Activated CD8-positive, alpha-beta T cell treated with anti-CD3 and anti-CD28 coated beads for 36 hours (primary cell): ENCODE measurements at regions of chr12 and their contacts with region 1.

Region 1: GRCh38 chr12:47715393-47715876 is 9.6 kb upstream of the RPAP3 start:
- DNase-seq: peak; percentile 91
- ATAC-seq: peak; percentile 88
- H3K4me3 Mint-ChIP-seq: no peak overlapping the region
- H3K27ac Mint-ChIP-seq: no peak overlapping the region
- H3K4me1 Mint-ChIP-seq: peaks cover 19% of the 10 kb centered on the region
- H3K27me3 Mint-ChIP-seq: no peaks in the 10 kb centered on the region
- CTCF ChIP-seq: peak; percentile 71

Region 2: DNA sequence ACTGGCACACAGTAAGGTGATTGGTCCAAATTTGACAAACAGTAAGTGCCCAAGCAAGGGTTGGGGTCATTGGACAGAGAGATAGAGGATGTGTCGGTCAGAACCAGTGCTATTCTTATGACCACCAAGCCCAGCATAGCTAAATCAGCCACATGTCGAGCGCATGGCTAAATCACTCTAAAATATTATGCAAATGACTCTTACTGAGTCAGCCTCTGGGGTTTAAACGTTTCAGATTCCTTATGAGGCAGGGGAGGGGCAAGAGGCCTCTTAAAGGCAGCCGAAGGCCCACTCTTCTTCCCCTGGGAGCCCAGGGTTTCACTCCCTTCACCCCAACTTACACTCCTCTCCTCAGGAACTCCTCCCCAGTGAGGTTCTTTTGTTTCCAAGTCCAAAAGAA is 10.5 kb after region 1 on chr12:
- CTCF ChIA-PET with region 1: interaction called, 15 read pairs
- POLR2A ChIA-PET with region 1: interaction called, 4 read pairs
- intact Hi-C with region 1: no loop called
- DNase-seq: no peak
- ATAC-seq: no peak
- H3K4me3 Mint-ChIP-seq: no peak overlapping the region
- H3K27ac Mint-ChIP-seq: no peak overlapping the region
- H3K4me1 Mint-ChIP-seq: peaks cover 19% of the 10 kb centered on the region
- H3K27me3 Mint-ChIP-seq: no peaks in the 10 kb centered on the region
- CTCF ChIP-seq: no peak

Region 3: DNA sequence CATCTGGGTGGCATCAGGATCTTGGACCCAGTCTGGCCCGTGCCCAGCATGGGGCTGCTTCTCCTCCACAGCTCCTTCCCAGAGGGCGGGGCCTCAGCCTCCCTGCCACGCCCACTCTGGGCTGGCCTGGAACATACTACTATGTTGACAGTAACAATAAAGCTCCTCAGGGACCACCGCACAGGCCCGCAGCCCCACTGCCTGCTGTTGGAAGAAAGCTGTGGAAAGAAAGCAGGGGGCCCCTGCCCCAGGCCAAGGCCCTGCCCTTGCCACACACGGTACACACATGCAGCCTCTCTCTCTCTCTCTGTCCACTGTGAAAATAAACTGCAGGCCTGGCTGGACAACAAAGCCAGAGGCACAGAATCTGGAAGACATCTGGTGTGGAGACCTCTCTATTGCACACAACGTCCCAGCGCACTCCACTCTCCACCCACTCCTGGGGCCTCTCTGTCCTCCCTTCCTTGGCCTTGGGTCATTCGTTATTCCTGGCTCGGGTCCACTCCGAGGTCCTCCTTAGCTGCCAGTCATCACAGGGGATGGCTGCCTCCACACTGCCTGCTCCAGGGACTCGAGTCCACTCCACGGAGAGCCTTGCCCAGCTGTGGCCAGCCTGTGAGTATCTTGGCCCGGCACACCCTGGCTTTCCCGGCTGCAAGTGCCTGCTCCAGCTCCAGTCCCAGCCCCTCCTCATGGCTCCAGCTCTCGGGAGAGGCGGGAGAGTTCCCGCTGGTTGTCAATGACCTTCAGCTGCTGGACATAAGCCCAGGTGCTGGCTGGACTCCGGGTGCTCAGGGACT is 21.6 kb after region 1 on chr12:
- CTCF ChIA-PET with region 1: interaction called, 134 read pairs
- POLR2A ChIA-PET with region 1: interaction called, 3 read pairs
- intact Hi-C with region 1: no loop called
- DNase-seq: no peak
- ATAC-seq: no peak
- H3K4me3 Mint-ChIP-seq: no peak overlapping the region
- H3K27ac Mint-ChIP-seq: no peak overlapping the region
- H3K4me1 Mint-ChIP-seq: peaks cover 23% of the 10 kb centered on the region
- H3K27me3 Mint-ChIP-seq: no peaks in the 10 kb centered on the region
- CTCF ChIP-seq: no peak

Region 4: GRCh38 chr12:47758834-47759690 is 43.6 kb after region 1 on chr12 and contains the start of gene RAPGEF3:
- CTCF ChIA-PET with region 1: interaction called, 23 read pairs
- POLR2A ChIA-PET with region 1: no interaction called
- intact Hi-C with region 1: no loop called
- DNase-seq: peak; percentile 71
- ATAC-seq: peak; percentile 65
- H3K4me3 Mint-ChIP-seq: peak within 1 kb of the TSS; percentile 65
- H3K27ac Mint-ChIP-seq: no peak within 1 kb of the TSS
- H3K4me1 Mint-ChIP-seq: peaks cover 30% of the 10 kb centered on the region
- H3K27me3 Mint-ChIP-seq: no peaks in the 10 kb centered on the region
- CTCF ChIP-seq: peak; percentile 68
- total RNA-seq, gene RAPGEF3: 0.56 to 0.58 TPM

Region 5: DNA sequence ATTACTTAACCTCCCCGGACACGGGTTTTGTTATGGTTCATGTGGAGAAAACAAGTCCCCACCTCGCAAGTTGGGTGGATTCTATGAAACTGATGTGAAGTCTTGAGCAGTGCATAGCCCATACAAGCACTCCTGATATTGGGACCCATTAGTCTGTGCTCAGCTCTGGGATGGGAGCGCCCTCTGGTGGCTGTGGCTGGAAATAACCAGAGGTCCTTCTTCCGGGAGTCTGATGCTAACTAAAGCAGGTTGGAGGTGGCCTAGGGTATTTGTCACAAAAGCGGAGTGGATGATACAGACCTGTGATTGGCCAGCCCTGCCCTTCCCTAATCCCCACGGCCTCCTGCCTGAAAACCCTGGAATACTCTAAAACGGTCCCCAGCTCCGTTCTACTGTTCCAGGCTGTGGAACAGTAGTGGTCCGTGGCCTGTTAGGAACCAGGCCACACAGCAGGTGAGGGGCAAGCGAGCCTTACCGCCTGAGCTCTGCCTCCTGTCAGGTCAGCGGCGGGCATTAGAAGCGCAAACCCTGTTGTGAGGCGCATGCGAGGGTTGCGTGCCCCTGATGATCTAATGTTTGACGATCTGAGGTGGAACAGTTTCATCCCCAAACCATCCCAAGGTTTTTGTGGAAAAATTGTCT is 64.0 kb after region 1 on chr12:
- CTCF ChIA-PET with region 1: interaction called, 37 read pairs
- POLR2A ChIA-PET with region 1: interaction called, 4 read pairs
- intact Hi-C with region 1: loop called (anchors 5 kb)
- DNase-seq: peak; percentile 96
- ATAC-seq: peak; percentile 80
- H3K4me3 Mint-ChIP-seq: peak overlapping the region; percentile 7
- H3K27ac Mint-ChIP-seq: peak overlapping the region; percentile 18
- H3K4me1 Mint-ChIP-seq: peaks cover 31% of the 10 kb centered on the region
- H3K27me3 Mint-ChIP-seq: no peaks in the 10 kb centered on the region
- CTCF ChIP-seq: peak; percentile 89

Region 6: DNA sequence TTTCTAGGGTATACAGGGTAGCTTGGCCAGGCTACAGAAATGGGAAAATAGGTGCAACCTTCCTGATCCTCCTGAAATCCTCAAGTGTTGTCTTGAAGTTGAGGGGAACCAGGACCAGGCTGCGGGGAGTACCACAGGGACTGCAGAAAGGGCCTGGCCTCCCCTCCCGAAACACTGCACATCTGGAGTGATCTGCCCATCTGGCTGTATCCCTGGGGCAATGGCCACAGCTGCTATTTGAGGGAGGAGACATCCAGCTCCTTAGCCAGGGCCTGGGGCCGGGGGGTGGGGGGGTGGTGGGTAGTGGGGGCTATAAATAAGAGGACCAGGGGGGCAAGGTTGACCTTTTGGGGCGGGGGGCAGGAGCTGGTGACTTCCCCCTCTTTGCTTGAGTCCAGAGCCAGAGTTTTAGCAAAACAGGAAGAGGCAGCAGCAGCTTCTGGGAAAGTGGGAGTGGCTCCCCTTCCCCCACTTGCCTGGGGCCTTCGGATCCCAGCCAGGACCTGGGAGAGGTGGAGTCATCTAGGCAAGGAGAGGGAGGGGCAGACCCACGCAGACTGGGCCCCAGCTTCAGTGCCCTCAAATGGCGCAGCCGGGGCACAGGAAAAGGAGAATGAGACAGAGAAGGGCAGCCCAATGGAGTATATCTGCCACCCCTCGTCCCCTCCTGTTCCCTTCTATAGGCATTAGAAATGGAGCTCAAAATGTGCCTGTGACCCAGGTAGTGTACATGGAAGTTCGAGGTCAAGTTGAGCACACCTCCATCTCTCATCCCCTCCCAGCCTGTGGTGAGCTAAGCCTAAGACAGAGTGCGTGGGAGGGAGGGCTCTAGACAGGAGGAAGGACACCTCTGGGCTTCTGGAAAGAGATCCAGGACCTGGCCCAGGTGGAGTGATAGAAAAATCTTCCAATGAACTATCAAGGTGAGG is 113.4 kb after region 1 on chr12:
- CTCF ChIA-PET with region 1: interaction called, 24 read pairs
- POLR2A ChIA-PET with region 1: no interaction called
- intact Hi-C with region 1: no loop called
- DNase-seq: no peak
- ATAC-seq: no peak
- H3K4me3 Mint-ChIP-seq: peak overlapping the region; percentile 56
- H3K27ac Mint-ChIP-seq: peak overlapping the region; percentile 84
- H3K4me1 Mint-ChIP-seq: peaks cover 89% of the 10 kb centered on the region
- H3K27me3 Mint-ChIP-seq: no peaks in the 10 kb centered on the region
- CTCF ChIP-seq: no peak